Aorta (tissue), 5 donors: ENCODE measurements at regions of chr11 and their contacts with region 1.

Region 1: GRCh38 chr11:66408488-66409214 is 12.2 kb upstream of the NPAS4 start:
- DNase-seq: peak; percentile 94 to 98
- ATAC-seq: peak; percentile 95
- H3K4me3 ChIP-seq: peak overlapping the region; percentile 38 to 55
- H3K27ac ChIP-seq: no peak overlapping the region
- H3K4me1 ChIP-seq: no peaks in the 10 kb centered on the region
- H3K27me3 ChIP-seq: no peaks in the 10 kb centered on the region

Region 2: GRCh38 chr11:66429983-66430602 is 21.4 kb after region 1 on chr11:
- intact Hi-C with region 1: loop called (anchors 1 kb)
- DNase-seq: peak; percentile 86 to 93
- ATAC-seq: peak; percentile 85
- H3K4me3 ChIP-seq: no peak overlapping the region
- H3K27ac ChIP-seq: no peak overlapping the region
- H3K4me1 ChIP-seq: no peaks in the 10 kb centered on the region
- H3K27me3 ChIP-seq: no peaks in the 10 kb centered on the region

Region 3: DNA sequence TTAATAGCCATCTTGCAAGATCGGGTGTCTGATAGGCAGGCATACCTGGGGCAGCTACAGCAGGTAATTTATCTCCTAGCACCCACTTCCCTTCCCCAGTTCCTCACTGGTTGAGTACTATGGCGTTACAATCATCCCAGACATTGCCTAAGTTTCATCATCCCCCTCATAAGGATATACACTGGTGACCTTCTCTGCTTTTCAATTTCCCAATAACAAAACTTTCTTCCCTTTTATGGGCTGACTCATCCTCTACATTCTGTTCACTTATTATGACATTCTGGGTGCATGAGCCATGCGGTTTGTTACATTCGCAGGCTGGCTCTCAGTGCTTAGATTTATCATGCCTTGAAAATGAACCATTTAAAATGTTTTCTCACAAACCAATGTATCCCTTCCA is 35.0 kb after region 1 on chr11:
- intact Hi-C with region 1: loop called (anchors 5 kb)
- DNase-seq: no peak
- ATAC-seq: no peak
- H3K4me3 ChIP-seq: no peak overlapping the region
- H3K27ac ChIP-seq: no peak overlapping the region
- H3K4me1 ChIP-seq: no peaks in the 10 kb centered on the region
- H3K27me3 ChIP-seq: no peaks in the 10 kb centered on the region

Region 4: GRCh38 chr11:66491315-66491935 is 82.8 kb after region 1 on chr11:
- intact Hi-C with region 1: no loop called
- DNase-seq: no peak
- ATAC-seq: no peak
- H3K4me3 ChIP-seq: no peak overlapping the region
- H3K27ac ChIP-seq: no peak overlapping the region
- H3K4me1 ChIP-seq: no peaks in the 10 kb centered on the region
- H3K27me3 ChIP-seq: no peaks in the 10 kb centered on the region

Region 5: DNA sequence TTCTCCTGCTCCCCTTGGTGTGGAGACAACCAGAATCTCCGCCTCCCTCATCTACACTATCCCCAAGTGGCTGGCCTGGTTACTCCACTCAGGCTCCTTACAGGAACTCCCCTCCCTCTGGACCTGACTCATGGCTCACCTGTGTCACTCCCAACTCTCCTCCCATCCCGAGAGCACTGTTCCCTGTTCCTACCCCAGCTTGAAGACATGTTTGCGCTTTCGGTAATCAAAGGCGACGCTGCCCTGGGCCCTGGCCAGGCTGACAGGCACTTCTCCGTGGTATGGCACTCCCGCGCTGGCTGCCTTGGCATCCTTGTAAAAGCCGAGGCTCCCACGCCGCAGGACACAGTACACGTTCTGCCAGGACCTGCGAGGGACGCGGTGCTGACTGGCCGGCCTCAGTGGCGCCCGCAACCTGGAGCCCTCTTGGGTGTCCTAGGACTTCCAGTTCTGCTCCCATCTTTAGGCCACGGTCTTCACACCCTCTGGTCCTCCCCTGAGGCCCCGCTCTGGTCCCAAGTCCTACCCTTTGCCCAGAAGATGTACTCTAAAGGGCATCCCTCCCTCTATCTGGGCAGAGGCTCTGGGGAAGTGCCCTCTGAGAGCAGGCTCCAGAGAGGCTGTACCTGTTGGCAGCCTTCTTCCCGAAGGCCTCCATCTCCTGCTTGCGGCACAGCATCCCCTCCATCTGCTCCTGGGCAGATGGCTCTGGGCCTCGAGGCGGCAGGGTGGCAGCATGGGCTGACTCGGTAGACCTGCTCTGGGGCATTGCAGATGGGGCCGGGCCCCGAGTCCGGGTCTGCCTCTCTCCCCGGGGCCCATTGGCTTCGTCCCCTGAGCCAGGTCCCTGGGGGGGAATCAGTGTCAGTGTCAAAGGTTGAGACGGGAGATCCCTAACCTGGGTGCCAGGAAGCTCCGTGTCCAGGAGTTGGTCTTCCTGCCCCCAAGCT is 278.4 kb after region 1 on chr11:
- intact Hi-C with region 1: loop called in 1 of 2 experiments (anchors 10 kb)
- DNase-seq: peak in 1 of 2 donors; percentile 65
- ATAC-seq: no peak
- H3K4me3 ChIP-seq: no peak overlapping the region
- H3K27ac ChIP-seq: no peak overlapping the region
- H3K4me1 ChIP-seq: no peaks in the 10 kb centered on the region
- H3K27me3 ChIP-seq: no peaks in the 10 kb centered on the region